GM12878 (cell line): ENCODE measurements at regions of chr17 and their contacts with region 1.

Region 1: GRCh38 chr17:58631523-58632323 is 60.1 kb downstream of the TEX14 start:
- DNase-seq: peak; percentile 93
- ATAC-seq: peak; percentile 91
- H3K4me3 ChIP-seq: peak overlapping the region; percentile 59
- H3K27ac ChIP-seq: peak overlapping the region; percentile 98
- H3K4me1 ChIP-seq: peaks cover 4% of the 10 kb centered on the region
- H3K27me3 ChIP-seq: no peaks in the 10 kb centered on the region
- CTCF ChIP-seq: peak in 2 of 3 experiments; percentile 14 to 23; a peak in 2 of 6 replicates
- EP300 ChIP-seq: peak in 1 of 2 experiments; percentile 18; a peak in 1 of 4 replicates
- POLR2A ChIP-seq: peak; percentile 96
- RAD21 ChIP-seq: peak; percentile 42; the same call in 1 of the 2 replicates

Region 2: GRCh38 chr17:57622683-57623433 is 1008.9 kb before region 1 on chr17:
- CTCF ChIA-PET with region 1: no interaction called
- POLR2A ChIA-PET with region 1: no interaction called
- RAD21 ChIA-PET with region 1: no interaction called
- SMC1A ChIA-PET with region 1: no interaction called
- in situ Hi-C with region 1: no loop called
- intact Hi-C with region 1: no loop called
- DNase-seq: peak; percentile 34
- ATAC-seq: peak; percentile 96
- H3K4me3 ChIP-seq: peak overlapping the region; percentile 43
- H3K27ac ChIP-seq: peak overlapping the region; percentile 72
- H3K4me1 ChIP-seq: peaks cover 32% of the 10 kb centered on the region
- H3K27me3 ChIP-seq: no peaks in the 10 kb centered on the region
- CTCF ChIP-seq: no peak
- EP300 ChIP-seq: 0 out of 4 replicates have a peak, but pooled peaks of 1 of the 2 experiments have one; percentile 27
- POLR2A ChIP-seq: no peak
- RAD21 ChIP-seq: no peak

Region 3: DNA sequence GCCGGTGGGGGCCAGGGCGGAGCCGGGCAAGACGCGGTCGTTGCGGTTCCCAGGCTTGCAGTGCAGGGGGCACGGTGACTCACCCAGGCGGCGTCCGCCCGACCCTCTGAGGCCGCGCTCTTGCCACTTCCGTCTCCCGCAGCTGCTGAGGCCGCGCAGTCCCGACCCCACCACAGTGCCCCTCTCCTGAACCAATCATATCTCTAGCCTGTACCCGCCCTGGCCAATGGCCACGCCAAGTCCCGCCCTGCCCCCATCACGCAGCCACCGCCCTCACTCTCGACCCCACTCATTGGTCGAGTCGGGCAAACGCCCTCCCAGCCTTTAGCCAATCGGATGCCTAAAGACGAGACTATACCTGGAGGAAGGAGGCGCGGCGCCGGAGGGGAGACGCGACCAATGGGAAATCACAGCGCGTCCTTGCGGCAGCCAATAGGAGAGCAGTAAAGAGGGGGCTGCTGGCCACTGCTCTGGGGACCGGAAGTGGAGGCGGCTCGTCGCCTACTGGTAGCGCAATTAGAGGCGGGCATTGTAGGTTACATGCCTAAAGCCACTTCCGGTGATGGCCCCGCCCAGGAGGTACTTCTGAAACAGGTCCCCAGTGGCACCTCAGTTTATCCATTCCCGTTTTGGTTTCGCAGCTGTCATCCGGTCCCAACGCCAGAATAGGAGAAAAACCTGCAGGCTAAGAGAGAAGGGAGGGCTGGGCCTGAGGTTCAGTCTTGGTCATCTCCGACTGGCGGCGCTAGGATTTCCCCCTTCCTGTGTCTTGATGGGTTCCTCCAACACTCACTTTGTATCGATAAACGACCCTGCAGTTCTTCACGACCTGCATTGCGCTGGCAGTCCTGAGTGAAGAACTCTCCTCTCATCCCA is 113.8 kb before region 1 on chr17:
- CTCF ChIA-PET with region 1: interaction called, 8 read pairs
- POLR2A ChIA-PET with region 1: interaction called, 5 read pairs
- RAD21 ChIA-PET with region 1: interaction called, 14 read pairs
- SMC1A ChIA-PET with region 1: interaction called, 7 read pairs
- in situ Hi-C with region 1: no loop called
- intact Hi-C with region 1: loop called (anchors 1 kb)
- DNase-seq: peak; percentile 99
- ATAC-seq: peak; percentile 89
- H3K4me3 ChIP-seq: peak overlapping the region; percentile 99
- H3K27ac ChIP-seq: peak overlapping the region; percentile 93
- H3K4me1 ChIP-seq: peaks cover 19% of the 10 kb centered on the region
- H3K27me3 ChIP-seq: no peaks in the 10 kb centered on the region
- CTCF ChIP-seq: no peak
- EP300 ChIP-seq: peak in 1 of 2 experiments; percentile 44; a peak in 1 of 4 replicates
- POLR2A ChIP-seq: peak; percentile 86
- RAD21 ChIP-seq: no peak

Region 4: DNA sequence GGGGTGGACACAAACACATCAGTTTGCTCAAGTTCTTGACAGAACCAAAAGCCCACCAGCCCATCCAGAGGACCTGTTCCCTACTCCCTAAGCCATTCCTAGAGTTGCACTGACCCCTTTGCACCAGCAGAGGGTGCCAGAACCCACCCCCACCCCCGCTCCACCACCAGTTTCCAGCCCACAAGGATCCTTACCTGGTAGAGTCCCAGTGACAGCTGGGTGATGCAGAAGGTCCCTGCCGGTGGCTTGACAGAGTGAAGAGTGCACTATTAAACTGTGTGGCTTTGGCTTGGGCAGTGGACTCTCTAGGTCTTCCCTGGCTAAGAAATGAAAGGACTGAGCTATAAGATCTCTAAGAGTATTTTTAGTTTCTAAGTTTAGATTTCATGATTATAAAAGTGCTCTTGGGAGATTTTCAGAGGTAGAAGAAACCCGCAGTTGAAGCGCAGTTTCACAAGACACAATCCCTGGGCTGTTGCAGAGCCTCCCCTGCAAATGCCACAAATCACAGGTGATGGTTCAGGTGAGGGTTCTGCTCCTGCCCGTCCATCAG is 43.9 kb before region 1 on chr17:
- CTCF ChIA-PET with region 1: interaction called, 27 read pairs
- POLR2A ChIA-PET with region 1: interaction called, 6 read pairs
- RAD21 ChIA-PET with region 1: interaction called, 6 read pairs
- SMC1A ChIA-PET with region 1: interaction called, 40 read pairs
- in situ Hi-C with region 1: no loop called
- intact Hi-C with region 1: loop called (anchors 1 kb)
- DNase-seq: no peak
- ATAC-seq: peak; percentile 92
- H3K4me3 ChIP-seq: no peak overlapping the region
- H3K27ac ChIP-seq: no peak overlapping the region
- H3K4me1 ChIP-seq: no peaks in the 10 kb centered on the region
- H3K27me3 ChIP-seq: no peaks in the 10 kb centered on the region
- CTCF ChIP-seq: peak; percentile 94 to 97 (median 97)
- EP300 ChIP-seq: no peak
- POLR2A ChIP-seq: no peak
- RAD21 ChIP-seq: peak; percentile 95

Region 5: GRCh38 chr17:58615768-58616659 is 15.7 kb before region 1 on chr17:
- CTCF ChIA-PET with region 1: interaction called, 9 read pairs
- POLR2A ChIA-PET with region 1: interaction called, 16 read pairs
- RAD21 ChIA-PET with region 1: interaction called, 15 read pairs
- SMC1A ChIA-PET with region 1: interaction called, 28 read pairs
- in situ Hi-C with region 1: no loop called
- intact Hi-C with region 1: loop called (anchors 1 kb)
- DNase-seq: peak; percentile 71
- ATAC-seq: peak; percentile 79
- H3K4me3 ChIP-seq: peak overlapping the region; percentile 28; the same call in 1 of the 2 replicates
- H3K27ac ChIP-seq: peak overlapping the region; percentile 83
- H3K4me1 ChIP-seq: peaks cover 63% of the 10 kb centered on the region
- H3K27me3 ChIP-seq: no peaks in the 10 kb centered on the region
- CTCF ChIP-seq: no peak
- EP300 ChIP-seq: 0 out of 4 replicates have a peak, but pooled peaks of 1 of the 2 experiments have one; percentile 31
- POLR2A ChIP-seq: no peak
- RAD21 ChIP-seq: no peak

Region 6: DNA sequence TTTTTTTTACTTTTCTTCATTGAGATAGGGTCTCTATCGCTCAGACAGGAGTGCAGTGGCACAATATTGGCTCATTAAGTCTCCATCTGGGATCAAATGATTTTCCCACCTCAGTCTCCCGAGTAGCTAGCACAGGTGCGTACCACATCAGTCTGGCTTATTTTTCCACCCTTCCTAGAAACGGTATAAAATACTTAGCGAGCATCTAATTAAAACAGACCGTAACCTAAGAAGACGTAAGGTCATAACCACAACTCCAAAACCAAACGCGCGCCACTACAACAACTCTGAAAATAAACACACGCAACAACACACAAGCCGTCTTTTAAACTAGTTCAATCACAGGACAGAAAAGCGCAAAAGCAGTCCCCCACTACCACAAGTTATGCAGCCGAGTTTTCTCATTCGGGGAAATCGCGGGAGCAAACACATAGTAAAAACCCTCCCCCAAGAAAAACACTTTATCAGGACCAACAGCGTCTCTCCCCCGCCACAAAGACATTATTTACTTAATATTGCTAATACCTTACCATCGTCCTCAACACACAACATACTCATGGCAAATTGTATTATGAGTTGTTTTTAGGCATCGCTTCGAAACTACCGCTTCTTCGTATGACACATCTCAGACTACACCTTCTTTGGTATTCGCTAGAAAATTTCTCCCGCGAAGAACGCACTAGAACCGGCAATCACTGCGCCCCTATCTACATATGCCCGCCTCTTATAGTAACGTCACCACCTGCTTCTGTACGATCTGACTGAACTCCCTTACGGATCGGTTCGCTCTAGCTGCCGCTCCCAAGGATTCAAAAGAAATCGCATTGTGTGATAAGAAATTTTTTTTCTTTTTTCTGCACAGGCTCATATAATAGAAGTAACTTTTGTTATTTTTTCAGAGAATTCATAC is 27.3 kb after region 1 on chr17:
- CTCF ChIA-PET with region 1: no interaction called
- POLR2A ChIA-PET with region 1: interaction called, 6 read pairs
- RAD21 ChIA-PET with region 1: interaction called, 5 read pairs
- SMC1A ChIA-PET with region 1: interaction called, 15 read pairs
- in situ Hi-C with region 1: no loop called
- intact Hi-C with region 1: loop called (anchors 1 kb)
- DNase-seq: peak; percentile 95
- ATAC-seq: peak; percentile 93
- H3K4me3 ChIP-seq: peak overlapping the region; percentile 44; the same call in 1 of the 2 replicates
- H3K27ac ChIP-seq: peak overlapping the region; percentile 77
- H3K4me1 ChIP-seq: no peaks in the 10 kb centered on the region
- H3K27me3 ChIP-seq: no peaks in the 10 kb centered on the region
- CTCF ChIP-seq: no peak
- EP300 ChIP-seq: no peak; a peak in 1 of 4 replicates
- POLR2A ChIP-seq: peak; percentile 98
- RAD21 ChIP-seq: peak; percentile 5; the same call in 1 of the 2 replicates

Region 7: DNA sequence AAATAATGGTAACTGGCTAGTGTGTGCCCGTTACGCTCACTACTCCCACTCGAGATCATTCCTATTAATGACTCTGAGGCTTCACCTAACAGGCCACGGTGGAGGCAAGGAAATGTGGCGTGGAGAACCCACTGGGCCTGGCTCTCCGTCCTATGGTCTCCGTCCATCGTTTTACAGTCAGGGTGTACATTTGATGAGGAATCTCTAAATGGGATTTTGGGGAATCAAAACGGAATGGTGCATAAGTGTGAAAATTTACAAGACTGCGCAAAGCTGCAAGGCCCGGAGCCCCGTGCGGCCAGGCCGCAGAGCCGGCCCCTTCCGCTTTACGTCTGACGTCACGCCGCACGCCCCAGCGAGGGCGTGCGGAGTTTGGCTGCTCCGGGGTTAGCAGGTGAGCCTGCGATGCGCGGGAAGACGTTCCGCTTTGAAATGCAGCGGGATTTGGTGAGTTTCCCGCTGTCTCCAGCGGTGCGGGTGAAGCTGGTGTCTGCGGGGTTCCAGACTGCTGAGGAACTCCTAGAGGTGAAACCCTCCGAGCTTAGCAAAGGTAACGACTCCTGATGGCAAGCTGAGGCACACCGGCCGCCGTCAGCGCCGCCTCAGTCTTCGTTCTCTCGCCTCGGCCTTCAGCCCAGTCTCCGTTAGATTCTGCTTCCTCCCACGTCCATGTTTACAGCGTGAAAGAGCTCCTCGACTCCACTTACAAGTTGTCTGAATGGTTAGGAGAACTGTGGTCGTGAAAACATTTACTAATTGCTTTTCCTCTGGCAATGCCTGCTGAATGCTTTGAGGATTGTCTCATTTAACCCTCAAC is 60.7 kb after region 1 on chr17 and contains the start of gene RAD51C:
- CTCF ChIA-PET with region 1: interaction called, 3 read pairs
- POLR2A ChIA-PET with region 1: interaction called, 12 read pairs
- RAD21 ChIA-PET with region 1: interaction called, 5 read pairs
- SMC1A ChIA-PET with region 1: interaction called, 7 read pairs
- in situ Hi-C with region 1: no loop called
- intact Hi-C with region 1: no loop called
- DNase-seq: peak; percentile 67
- ATAC-seq: peak; percentile 98
- H3K4me3 ChIP-seq: peak within 1 kb of the TSS; percentile 66
- H3K27ac ChIP-seq: peak within 1 kb of the TSS; percentile 96
- H3K4me1 ChIP-seq: no peaks in the 10 kb centered on the region; the same call in none of the 2 replicates
- H3K27me3 ChIP-seq: no peaks in the 10 kb centered on the region
- CTCF ChIP-seq: no peak
- EP300 ChIP-seq: no peak; a peak in 1 of 4 replicates
- POLR2A ChIP-seq: peak; percentile 87
- RAD21 ChIP-seq: no peak
- polyA plus RNA-seq, gene RAD51C: 229 to 240 TPM